ENCODE measurements at regions of chr10 and their contacts with region 1.

Region 1: DNA sequence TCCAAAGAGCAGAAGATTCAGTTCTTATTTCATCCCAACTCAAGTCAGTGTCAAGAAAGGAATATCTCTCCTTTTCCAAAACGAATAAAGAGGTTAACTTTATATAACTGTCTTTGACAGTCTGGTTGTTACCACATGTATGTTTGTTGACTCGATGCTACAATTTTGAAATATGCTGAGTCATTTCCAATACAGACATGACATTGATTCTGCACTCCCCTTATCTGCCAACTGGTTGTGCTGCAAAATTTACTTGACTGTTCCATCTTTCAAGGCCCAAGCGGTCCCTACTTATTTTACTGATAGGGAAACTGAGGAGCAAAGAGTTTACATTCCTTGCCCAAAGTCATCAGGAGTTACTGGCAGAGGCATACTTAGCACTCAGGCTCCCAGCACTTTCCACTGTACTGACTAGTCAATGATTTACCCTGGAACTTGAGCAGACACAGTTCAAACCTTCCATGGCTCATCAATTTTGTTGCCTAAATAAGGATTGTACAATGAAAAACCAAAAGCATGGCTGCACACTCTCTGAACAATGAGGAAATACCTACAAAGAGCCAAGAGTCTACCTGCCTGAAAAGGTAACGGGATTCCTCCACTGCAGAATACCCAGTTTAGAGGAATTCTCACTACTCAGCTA is 52.8 kb downstream of the ABLIM1 start:
- DNase-seq: no peak
- ATAC-seq: no peak

Region 2: GRCh38 chr10:114285961-114286441 is 319.3 kb before region 1 on chr10:
- intact Hi-C with region 1: no loop called
- DNase-seq: no peak
- ATAC-seq: no peak

Region 3: GRCh38 chr10:114571316-114571989 is 33.8 kb before region 1 on chr10:
- intact Hi-C with region 1: loop called in 1 of 2 experiments (anchors 5 kb)
- DNase-seq: no peak
- ATAC-seq: no peak